RWPE1 (cell line): ENCODE measurements at regions of chr10 and their contacts with region 1.

Region 1: DNA sequence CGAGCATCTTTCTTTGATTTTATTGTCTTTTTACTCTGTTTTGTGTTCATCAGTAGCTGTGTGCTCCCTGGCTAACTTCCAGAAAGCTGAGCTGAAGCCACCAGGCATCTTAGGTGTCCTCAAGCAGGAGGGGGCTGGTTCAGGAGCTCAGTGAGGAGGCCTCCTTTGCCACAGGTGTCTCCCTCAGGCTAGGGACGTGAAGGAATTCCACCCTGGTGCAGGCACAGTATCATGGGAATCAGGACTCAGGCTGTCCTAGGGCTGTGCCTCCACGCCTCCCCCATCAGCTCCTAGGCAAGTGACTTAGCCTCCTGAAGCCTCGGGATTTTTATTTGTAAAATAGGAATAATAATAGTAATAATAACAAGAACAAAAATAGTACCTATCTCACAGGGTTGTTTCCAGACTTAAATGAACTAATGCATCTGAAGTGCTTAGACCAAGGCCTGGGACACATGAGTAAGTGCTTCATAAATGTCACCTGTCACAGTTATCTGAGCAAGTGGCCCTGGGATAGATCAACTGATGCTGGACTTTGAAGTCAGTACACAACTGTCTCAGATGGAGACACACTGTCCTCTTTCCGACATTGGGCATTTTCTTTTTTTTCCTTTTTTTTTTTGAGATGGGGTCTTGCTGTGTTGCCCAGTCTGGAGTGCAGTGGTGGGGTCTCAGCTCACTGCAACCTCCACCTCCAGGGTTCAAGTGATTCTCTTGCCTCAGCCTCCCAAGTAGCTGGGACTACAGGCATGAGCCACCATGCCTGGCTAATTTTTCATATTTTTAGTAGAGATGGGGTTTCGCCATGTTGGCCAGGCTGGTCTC is 7.0 kb upstream of the NEURL1 start:
- DNase-seq: no peak
- H3K27ac ChIP-seq: no peak overlapping the region
- CTCF ChIP-seq: no peak

Region 2: DNA sequence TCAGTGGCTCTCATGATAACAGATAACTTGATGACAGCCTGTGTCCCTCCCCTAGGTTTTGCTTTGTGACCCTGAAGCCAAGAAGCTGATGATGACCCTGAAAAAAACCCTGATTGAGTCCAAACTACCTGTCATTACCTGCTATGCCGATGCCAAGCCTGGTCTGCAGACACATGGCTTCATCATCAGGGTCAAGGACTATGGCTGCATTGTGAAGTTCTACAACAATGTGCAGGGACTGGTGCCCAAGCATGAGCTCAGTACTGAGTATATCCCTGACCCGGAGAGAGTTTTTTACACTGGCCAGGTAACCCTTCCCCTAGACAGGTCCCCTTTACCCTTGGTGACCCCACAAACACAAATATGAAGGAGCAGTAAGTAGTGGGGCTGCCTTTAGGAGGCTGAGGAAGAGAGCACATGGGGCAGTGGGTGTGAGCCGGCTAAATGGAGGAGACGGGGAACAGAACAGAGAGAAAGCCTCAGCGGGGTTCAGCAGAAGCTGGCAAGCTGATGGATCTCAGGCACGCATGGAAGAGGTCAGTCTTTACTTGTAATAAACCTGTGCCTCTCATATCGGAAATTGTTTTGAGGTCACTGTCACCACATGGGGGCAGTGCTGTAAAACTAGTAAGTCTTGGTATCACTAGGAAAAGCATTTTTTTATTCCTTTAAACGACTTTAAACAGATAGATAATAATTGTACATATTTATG is 70.0 kb before region 1 on chr10:
- CTCF ChIA-PET with region 1: interaction called, 15 read pairs
- POLR2A ChIA-PET with region 1: no interaction called
- DNase-seq: peak; percentile 39
- H3K27ac ChIP-seq: no peak overlapping the region
- CTCF ChIP-seq: peak; percentile 65

Region 3: GRCh38 chr10:103448746-103449145 is 37.8 kb before region 1 on chr10:
- CTCF ChIA-PET with region 1: interaction called, 11 read pairs
- POLR2A ChIA-PET with region 1: no interaction called
- DNase-seq: peak; percentile 77
- H3K27ac ChIP-seq: peak overlapping the region; percentile 69
- CTCF ChIP-seq: no peak

Region 4: GRCh38 chr10:103582331-103583123 is 96.0 kb after region 1 on chr10:
- CTCF ChIA-PET with region 1: no interaction called
- POLR2A ChIA-PET with region 1: no interaction called
- DNase-seq: no peak
- H3K27ac ChIP-seq: no peak overlapping the region
- CTCF ChIP-seq: no peak

Region 5: DNA sequence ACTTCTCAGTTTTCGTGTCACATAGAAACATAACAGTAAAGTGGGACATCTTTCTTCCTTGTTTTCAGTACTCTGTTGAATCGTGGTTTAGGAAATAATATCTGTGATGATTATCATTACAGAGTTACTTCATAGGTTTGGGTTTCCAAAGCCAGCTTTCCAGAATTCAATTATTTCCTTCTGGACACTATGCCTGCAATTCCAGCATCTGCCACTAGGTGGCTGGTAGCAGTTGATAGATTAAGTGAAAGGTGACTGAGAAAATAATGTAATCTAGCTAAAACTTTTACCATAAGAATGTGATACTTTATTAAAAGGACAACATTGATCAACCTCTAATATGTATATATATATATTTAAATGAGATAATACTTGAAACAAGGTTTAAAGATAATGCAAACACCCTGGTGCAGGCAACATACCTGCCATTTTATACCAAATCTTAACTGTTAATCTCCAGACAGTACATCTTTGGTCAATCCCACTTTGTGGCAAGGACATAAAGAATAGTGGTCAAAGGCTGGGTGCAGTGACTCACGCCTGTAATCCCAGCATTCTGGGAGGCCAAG is 266.2 kb after region 1 on chr10:
- CTCF ChIA-PET with region 1: no interaction called
- POLR2A ChIA-PET with region 1: no interaction called
- DNase-seq: no peak
- H3K27ac ChIP-seq: no peak overlapping the region
- CTCF ChIP-seq: peak; percentile 69